ENCODE measurements at regions of chrX and their contacts with region 1.

Region 1: DNA sequence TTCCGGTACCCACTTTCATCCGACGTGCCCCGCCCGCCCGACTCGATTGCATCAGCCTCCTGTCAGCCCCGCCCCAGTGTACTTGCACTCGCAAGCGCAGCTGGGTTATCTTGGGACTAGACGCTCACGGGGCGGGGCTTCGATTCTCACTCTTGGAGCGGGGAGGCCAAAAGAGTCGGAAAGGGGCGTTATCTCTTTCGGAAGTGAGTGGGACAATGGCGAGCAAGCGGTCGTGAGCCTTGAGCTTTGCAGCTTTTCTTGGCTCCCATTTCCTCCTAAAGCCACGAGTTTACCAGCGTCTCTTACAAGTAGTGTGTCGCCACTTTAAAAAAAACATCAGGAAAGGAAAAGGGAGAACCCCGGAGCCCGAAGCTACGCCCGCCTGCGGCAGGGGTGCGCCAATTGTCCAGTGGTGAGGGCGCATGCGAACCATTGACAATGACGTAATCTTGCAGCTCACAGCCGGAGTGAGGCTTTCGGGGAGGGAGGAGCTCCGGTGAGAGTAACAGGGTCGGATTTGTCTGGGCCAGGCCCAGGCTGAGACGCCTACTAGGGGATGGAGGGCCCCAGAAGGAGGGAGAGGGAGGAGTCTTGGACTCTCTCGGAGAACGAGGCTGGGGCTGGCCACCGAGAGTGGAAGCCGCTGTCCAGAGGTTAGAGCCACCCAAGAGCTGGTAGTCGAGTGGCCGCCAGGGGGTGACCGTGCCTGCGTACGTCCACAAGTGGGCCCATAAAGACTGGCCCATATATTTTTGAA is 109.5 kb downstream of the GNL3L start:
- DNase-seq: peak; percentile 96
- ATAC-seq: peak; percentile 94

Region 2: GRCh38 chrX:54786962-54787361 is 147.4 kb after region 1 on chrX:
- intact Hi-C with region 1: no loop called
- DNase-seq: peak in 1 of 2 donors; percentile 39
- ATAC-seq: peak; percentile 88

Region 3: DNA sequence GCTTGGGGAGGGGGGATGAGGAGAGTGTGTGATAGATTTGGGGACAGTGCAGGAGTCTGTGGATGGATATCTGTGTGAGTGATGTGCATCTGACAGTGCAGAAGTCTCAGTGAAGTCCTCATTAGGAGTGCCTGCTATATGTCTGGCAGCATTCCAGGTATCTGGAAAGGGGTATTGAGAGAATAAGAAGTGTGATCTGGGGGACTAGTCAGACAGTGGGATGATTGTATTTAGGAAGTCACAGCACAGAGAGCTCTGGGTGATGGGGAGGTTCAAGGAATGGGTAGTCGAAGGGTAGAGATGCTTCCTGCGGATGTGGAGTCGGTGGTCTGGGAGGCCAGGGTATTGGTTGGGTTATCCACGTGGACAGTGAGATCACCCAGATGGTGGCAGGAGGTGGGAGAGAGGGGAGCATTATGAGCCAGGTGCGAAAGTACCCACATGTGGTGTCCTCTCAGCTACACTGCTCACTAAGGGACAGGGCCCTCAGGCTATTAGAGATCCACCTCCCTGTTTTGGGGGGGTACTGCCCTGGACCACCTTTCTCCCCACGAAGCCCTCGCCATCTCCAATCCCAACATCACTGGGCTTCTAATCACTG is 177.8 kb after region 1 on chrX:
- intact Hi-C with region 1: loop called in 1 of 2 experiments (anchors 10 kb)
- DNase-seq: no peak
- ATAC-seq: no peak

Region 4: DNA sequence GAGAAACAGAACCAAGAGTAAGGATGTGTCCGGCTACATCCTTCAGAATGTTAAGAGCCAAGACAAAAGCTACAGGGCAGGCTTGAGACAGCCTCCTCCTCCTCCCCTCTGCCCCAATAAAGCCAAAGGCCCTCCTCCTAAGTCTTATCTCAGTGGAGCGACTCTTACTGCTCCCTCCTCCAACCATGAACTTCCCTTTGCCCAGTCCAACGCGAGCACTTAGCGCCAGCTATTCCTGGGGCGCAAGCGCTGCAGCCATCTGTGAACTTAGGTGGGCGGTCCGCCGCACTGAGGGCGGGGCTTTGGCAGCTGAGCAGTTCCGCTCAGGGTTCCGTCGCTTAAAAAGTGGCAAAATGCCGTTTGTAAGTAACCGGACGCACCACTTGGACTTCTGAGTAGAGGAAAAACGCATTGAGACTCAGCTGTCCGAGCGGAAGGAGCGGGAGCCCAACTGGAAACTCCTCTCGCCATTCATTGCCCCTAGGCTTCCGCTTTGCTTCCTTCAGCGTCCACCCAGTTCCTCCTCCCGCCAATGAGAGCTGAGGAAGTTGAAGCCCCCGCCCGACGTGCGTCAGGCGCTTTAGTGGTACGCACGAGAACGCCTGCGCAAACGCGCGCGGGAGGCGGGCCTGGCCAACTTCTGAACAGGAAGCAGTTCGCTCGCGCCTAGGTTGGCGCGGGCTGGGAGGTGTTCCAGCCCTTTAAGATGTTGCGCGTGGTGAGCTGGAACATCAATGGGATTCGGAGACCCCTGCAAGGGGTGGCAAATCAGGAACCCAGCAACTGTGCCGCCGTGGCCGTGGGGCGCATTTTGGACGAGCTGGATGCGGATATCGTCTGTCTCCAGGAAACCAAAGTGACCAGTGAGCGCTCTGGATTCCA is 360.4 kb after region 1 on chrX and contains the start of gene APEX2:
- intact Hi-C with region 1: loop called in 1 of 2 experiments (anchors 10 kb)
- DNase-seq: peak; percentile 92
- ATAC-seq: peak; percentile 95
- total RNA-seq, gene APEX2: 20.8 to 22.1 TPM